OCI-LY7 (cell line): ENCODE measurements at regions of chr17 and their contacts with region 1.

Region 1: DNA sequence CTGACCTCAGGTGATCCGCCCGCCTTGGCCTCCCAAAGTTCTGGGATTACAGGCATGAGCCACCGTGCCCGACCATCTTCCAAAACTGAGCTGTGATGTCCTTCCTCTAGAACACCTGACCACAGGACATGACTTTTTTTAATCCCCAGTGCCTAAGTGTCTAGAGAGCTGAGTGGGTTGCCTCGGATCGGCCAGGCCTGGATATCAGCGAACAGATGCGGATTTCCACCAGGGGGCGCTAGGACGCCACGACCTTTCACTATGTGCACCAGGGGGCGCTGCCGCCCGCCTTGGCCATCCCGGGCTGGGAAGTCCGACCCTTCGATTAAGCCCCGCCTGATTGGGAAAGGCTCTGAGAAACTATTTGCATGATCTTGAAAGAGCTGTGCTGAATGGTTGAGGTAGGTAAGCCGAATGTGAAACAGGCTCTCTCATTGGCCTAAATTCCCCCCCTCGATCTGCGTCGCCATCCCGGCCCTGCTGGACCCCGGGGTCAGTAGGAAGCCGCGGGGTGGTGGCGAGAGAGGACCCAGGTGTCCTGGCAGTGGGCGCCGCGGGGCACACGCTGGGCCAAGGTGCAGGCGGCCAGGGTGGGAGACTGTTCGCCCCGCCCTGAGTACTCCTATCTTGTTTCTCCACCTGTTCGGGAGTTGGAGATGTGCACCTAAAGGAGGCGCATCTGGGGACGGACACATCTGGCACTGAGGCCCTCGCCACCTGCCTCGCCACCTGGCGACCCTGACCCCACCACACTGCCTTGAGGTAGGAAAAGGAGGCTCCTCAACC is at the start of gene ACBD4:
- DNase-seq: peak; percentile 98
- H3K4me3 ChIP-seq: peak within 1 kb of the TSS; percentile 71
- H3K27ac ChIP-seq: no peak within 1 kb of the TSS
- H3K4me1 ChIP-seq: peaks cover 18% of the 10 kb centered on the region
- CTCF ChIP-seq: peak; percentile 100
- total RNA-seq, gene ACBD4: 14.6 and 14.8 TPM in 2 replicates

Region 2: DNA sequence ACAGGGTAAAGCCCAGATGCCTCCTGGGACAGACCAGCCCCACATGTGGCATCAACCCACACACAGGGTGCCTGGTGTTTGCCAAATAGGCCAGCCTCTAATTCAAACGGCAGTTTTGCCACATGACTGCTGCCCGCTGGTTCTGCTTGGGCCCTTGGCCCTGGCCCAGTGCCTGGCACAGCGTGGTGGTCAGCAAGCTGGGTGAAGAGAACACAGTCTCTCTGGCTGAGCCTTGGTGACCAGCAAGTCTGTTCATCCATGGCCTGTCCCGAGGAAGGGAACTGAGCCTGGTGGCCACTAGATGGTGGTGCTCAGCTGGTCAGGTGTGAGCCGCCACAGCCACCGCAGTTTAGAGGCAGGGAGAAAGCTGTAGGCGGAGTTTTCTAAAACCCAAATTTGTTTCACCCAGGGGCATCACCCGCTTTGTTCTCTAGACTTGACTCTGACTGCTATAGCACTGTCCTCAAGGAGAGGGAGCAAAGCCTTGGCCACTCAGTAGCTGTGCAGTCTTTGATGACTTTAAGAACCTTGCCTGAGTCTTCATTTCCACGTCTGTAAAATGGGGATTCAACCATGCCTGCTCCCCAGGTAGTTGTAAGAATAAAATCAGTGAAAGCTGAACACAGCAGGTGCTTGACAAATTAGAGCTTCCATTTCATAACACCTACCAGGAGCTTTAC is 215.4 kb before region 1 on chr17:
- CTCF ChIA-PET with region 1: interaction called, 5 read pairs
- POLR2A ChIA-PET with region 1: no interaction called
- intact Hi-C with region 1: loop called (anchors 1 kb)
- DNase-seq: peak; percentile 79
- H3K4me3 ChIP-seq: no peak overlapping the region
- H3K27ac ChIP-seq: no peak overlapping the region
- H3K4me1 ChIP-seq: peaks cover 23% of the 10 kb centered on the region
- CTCF ChIP-seq: peak; percentile 84

Region 3: GRCh38 chr17:45021607-45022287 is 113.6 kb before region 1 on chr17:
- CTCF ChIA-PET with region 1: no interaction called
- POLR2A ChIA-PET with region 1: no interaction called
- intact Hi-C with region 1: loop called (anchors 2 kb)
- DNase-seq: peak; percentile 76
- H3K4me3 ChIP-seq: no peak overlapping the region
- H3K27ac ChIP-seq: no peak overlapping the region
- H3K4me1 ChIP-seq: peaks cover 14% of the 10 kb centered on the region
- CTCF ChIP-seq: peak; percentile 87

Region 4: GRCh38 chr17:45098869-45099616 is 36.3 kb before region 1 on chr17:
- CTCF ChIA-PET with region 1: no interaction called
- POLR2A ChIA-PET with region 1: no interaction called
- intact Hi-C with region 1: loop called (anchors 1 kb)
- DNase-seq: peak; percentile 78
- H3K4me3 ChIP-seq: no peak overlapping the region
- H3K27ac ChIP-seq: no peak overlapping the region
- H3K4me1 ChIP-seq: no peaks in the 10 kb centered on the region
- CTCF ChIP-seq: peak; percentile 94

Region 5: GRCh38 chr17:45148183-45149036 is 13.0 kb after region 1 on chr17 and contains the start of gene HEXIM1:
- CTCF ChIA-PET with region 1: interaction called, 7 read pairs
- POLR2A ChIA-PET with region 1: interaction called, 5 read pairs
- intact Hi-C with region 1: loop called (anchors 1 kb)
- DNase-seq: peak; percentile 100
- H3K4me3 ChIP-seq: peak within 1 kb of the TSS; percentile 75
- H3K27ac ChIP-seq: peak within 1 kb of the TSS; percentile 88
- H3K4me1 ChIP-seq: peaks cover 46% of the 10 kb centered on the region
- CTCF ChIP-seq: no peak
- total RNA-seq, gene HEXIM1: 12.1 and 13.9 TPM in 2 replicates

Region 6: DNA sequence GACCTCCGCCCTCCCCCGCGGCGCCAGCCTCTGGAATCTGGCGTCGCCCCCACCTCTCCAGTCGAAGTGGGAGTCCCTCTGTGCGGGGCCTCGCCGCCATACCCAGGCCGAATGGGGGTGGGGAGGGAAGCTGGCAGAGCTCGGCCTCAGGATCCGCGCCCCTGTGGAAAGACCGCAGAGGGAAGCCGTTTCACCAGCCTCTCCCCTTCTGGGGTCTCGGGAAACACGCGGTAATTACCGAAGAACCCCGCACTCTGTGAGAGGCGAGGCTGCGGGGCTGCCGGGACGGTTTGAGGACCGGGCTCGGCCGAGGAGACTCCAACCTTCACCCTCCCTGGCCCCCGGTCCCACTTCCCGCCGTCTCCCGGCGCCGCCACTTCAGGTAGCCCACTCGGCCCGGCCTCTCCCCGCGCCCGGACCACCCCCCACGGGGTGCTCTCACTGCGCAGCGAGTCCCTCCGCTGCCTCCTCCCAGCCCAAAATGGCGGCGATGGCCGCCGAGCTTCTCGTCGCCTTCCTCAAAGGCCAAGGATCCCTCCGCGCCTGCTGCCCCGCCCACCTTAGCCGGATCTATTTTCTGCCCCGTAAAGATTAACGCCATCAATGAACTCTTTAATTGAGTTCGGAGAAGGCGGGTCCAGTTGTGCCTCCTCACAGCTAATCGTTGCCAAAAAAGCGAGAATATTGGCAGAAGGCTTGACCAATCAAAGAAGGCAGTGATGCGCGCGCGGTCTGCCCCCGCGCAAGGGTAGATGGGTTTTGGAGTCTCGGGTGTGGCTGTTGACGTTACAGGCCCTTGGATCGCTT is 25.8 kb after region 1 on chr17:
- CTCF ChIA-PET with region 1: no interaction called
- POLR2A ChIA-PET with region 1: interaction called, 3 read pairs
- intact Hi-C with region 1: loop called (anchors 1 kb)
- DNase-seq: peak; percentile 100
- H3K4me3 ChIP-seq: peak overlapping the region; percentile 96
- H3K27ac ChIP-seq: peak overlapping the region; percentile 70
- H3K4me1 ChIP-seq: peaks cover 22% of the 10 kb centered on the region
- CTCF ChIP-seq: no peak; the same call in none of the 2 replicates

Region 7: DNA sequence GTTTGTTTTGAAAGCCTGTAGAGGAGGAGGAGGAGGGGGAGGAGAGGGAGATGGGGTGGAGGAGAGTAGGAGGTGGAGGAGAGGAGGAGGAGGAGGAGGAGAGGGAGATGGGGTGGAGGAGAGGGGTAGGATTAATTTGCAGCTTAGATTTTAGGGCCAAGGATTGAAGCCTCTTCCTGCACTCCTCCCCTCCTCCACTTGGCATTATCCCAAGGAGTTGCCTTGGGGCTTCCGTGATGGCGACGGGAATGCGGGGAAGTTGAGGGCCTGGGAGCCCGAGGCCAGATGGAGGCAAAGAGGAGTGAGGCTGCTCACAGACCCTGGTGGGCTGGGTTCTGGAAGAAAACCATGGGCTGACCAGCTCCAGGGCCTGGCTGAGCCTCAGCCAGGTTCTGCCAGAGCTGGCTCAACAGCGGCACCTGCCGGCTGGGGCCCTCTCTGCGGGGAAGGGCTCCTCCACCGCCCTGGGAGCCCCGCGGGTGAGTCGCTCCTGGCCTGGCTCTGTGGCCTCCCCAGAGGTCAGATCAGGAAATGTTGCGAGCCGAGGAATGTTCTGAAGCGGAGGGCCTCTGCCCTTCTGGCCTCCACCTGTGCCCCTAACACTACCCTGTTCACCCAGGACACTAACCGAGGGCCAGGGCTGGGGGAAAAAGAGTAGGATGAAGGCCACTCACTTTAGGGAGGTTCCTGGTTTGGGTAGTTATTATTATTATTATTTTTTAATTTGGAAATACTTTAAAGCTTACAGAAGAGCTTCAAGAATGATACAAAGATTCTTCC is 62.4 kb after region 1 on chr17:
- CTCF ChIA-PET with region 1: interaction called, 9 read pairs
- POLR2A ChIA-PET with region 1: interaction called, 3 read pairs
- intact Hi-C with region 1: loop called (anchors 1 kb)
- DNase-seq: peak; percentile 89
- H3K4me3 ChIP-seq: no peak overlapping the region
- H3K27ac ChIP-seq: no peak overlapping the region
- H3K4me1 ChIP-seq: peaks cover 12% of the 10 kb centered on the region
- CTCF ChIP-seq: peak; percentile 99